IMR-90 (cell line): ENCODE measurements at regions of chr2 and their contacts with region 1.

Region 1: GRCh38 chr2:98560256-98560771 is 48.0 kb downstream of the COA5 start:
- DNase-seq: peak; percentile 96
- ATAC-seq: peak; percentile 94
- H3K4me3 ChIP-seq: no peak overlapping the region
- H3K27ac ChIP-seq: peak overlapping the region; percentile 85
- H3K4me1 ChIP-seq: peaks cover 14% of the 10 kb centered on the region
- H3K27me3 ChIP-seq: no peaks in the 10 kb centered on the region
- CTCF ChIP-seq: no peak
- POLR2A ChIP-seq: no peak
- RAD21 ChIP-seq: 0 out of 2 replicates have a peak, but pooled peaks have one; percentile 9

Region 2: GRCh38 chr2:98334439-98335078 is 225.8 kb before region 1 on chr2:
- CTCF ChIA-PET with region 1: no interaction called
- POLR2A ChIA-PET with region 1: no interaction called
- dilution Hi-C with region 1: no loop called
- in situ Hi-C with region 1: no loop called
- intact Hi-C with region 1: no loop called
- DNase-seq: peak; percentile 91
- ATAC-seq: peak; percentile 97
- H3K4me3 ChIP-seq: no peak overlapping the region
- H3K27ac ChIP-seq: no peak overlapping the region
- H3K4me1 ChIP-seq: peaks cover 6% of the 10 kb centered on the region
- H3K27me3 ChIP-seq: peaks cover 2% of the 10 kb centered on the region
- CTCF ChIP-seq: no peak
- POLR2A ChIP-seq: no peak
- RAD21 ChIP-seq: no peak

Region 3: DNA sequence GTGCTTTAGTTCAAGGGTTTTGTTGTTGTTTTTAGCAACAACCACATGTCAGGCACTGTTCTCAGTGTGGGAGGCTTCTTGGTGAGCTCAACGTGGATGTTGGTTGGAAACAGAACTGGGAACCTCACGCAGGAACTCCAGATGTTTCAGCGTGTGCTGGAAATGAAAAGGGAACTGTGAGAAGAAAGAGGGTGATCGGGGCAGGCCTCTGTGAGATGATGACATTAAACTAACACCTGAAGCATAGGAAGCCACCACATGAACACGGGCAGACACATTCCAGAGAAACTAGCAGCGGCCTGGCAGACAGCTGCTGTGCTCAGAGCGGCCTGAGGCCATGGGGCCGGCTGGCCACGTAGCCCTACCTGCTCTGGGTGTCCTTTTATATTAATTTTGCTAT is 18.4 kb before region 1 on chr2:
- CTCF ChIA-PET with region 1: no interaction called
- POLR2A ChIA-PET with region 1: interaction called, 12 read pairs
- dilution Hi-C with region 1: no loop called
- in situ Hi-C with region 1: no loop called
- intact Hi-C with region 1: no loop called
- DNase-seq: no peak
- ATAC-seq: no peak
- H3K4me3 ChIP-seq: no peak overlapping the region
- H3K27ac ChIP-seq: no peak overlapping the region
- H3K4me1 ChIP-seq: no peaks in the 10 kb centered on the region
- H3K27me3 ChIP-seq: no peaks in the 10 kb centered on the region
- CTCF ChIP-seq: no peak
- POLR2A ChIP-seq: no peak
- RAD21 ChIP-seq: no peak